Right ventricle myocardium inferior (tissue), 1 donor: ENCODE measurements at regions of chr11 and their contacts with region 1.

Region 1: DNA sequence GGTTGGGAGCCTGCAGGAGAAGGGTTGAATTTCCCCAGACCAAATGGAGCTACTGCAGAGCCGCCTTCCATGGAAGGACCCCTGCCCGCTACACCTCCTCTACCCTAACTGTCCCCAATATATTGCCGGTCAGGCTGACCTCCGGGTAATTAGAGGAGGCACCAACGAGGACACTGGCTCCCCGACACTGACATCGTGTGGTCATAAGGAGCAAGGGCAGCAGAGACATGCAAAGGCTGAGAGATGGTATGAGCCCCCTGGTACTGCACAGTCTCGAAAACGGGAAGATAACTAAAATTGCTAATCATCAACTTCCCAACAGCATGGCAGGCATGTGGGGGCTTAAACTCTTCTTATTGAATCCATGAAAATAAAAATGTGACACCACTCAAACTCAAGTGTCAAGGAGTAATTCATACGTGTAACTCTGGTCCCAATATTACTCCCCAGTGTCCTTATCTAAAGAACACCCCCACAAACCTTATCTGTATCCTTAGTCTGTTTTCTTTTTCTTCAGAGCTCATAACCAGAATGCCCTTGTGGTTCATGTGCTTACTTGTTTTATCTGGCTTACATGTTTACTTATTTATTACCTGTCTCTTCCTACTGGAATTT is 4.4 kb downstream of the CAVIN3 start:
- DNase-seq: peak; percentile 67
- ATAC-seq: peak; percentile 27

Region 2: GRCh38 chr11:5818245-5818886 is 497.6 kb before region 1 on chr11:
- intact Hi-C with region 1: no loop called
- DNase-seq: no peak
- ATAC-seq: no peak

Region 3: GRCh38 chr11:6022956-6023355 is 293.0 kb before region 1 on chr11:
- intact Hi-C with region 1: loop called (anchors 2 kb)
- DNase-seq: no peak
- ATAC-seq: peak; percentile 69

Region 4: GRCh38 chr11:6223854-6224253 is 92.1 kb before region 1 on chr11:
- intact Hi-C with region 1: no loop called
- DNase-seq: no peak
- ATAC-seq: no peak

Region 5: DNA sequence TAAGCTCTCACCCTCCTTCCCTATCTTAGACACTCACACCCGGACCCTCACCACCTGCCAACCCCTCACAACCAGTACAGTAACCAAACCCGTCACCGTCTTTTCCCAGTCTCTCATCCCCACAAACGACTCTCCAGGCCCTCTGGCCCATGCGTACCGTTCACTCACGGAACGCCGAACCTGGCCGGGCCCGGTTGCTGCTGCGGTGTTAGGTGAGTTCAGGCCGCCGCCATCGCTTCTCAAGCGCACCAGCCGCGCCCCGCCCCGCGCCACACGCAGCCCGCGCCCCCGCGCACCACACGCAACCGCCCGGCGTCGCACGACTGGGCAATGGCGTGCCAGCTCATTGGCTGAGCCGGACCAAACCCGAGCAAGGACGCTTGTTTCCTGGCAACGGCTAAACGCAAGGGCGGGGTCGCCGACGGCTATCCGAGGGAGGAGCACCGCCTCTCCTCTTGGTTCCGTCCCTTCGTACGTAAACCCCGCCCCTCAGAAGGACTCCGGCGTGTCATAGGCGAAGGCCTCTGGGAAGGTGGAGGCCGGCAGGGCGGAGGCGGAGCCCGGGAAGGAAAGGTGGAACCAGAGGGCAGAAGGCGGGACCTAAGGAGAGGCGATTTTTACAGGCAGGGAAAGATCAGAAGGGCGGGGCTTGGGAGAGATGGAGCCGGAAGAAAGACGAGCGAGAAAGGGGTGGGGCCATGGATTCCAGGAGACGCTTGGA is 81.4 kb before region 1 on chr11 and contains the start of gene FHIP1B:
- intact Hi-C with region 1: loop called (anchors 1 kb)
- DNase-seq: peak; percentile 100
- ATAC-seq: peak; percentile 98
- total RNA-seq, gene FHIP1B: 13.3 TPM

Region 6: DNA sequence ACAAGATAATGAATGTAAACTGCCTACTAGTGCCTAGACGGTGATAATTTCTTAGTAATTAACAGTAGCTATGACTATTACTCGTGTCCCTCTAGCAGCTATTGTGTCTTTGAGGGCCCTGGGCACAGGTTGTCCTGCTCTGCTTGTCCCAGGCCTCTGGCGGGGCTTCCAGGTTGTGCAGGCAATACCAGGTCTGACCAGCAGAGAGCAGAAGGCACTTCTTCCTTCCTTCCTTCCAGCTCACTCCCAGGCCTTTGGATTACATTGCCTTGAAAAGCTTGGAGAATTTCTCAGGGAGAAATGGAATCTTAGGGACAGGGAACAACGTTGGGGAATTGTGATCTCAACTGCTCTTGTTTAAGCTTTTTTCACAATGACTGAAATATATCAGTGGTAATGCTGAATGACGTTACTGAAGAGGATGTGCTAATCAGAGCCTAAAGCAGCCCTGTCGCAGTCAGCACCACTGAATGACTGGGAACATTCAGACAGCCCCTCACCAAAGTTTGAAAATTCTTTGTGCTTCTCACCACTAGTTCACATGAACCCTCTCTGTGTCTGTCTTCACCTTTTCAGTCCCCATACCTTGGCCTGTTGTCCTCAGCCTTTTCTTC is 64.7 kb before region 1 on chr11:
- intact Hi-C with region 1: loop called (anchors 5 kb)
- DNase-seq: peak; percentile 79
- ATAC-seq: peak; percentile 82

Region 7: GRCh38 chr11:6269994-6270393 is 45.9 kb before region 1 on chr11:
- intact Hi-C with region 1: no loop called
- DNase-seq: no peak
- ATAC-seq: no peak

Region 8: DNA sequence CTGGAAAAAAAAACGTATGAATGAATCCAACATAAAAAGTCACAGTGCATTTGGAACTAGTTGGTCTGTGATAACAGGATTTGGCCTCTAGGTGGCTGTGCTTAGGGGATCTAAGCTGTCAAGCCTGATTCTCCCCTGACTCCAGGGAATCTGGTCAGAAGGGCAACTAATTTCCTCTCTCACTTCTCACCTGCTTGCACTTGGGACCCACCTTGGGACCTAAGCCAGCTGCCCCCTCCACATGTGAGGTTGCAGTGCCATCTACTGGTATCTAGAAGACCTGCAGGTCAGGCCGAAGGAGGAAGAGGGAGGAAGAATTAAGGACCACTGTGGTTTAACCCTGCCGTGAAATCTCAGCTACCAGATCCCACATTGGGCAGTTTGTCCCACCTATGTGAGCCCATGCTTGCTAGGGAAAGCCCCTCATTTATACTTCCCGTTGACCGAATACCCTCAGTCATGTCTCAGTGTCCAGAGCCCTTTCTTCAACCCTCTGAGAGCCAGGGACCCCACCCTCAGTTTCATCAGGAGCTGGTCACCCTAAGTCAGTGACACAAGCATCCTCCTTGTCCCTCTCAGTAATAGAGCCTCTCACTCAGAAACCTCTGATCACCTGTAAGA is 37.6 kb after region 1 on chr11:
- intact Hi-C with region 1: loop called (anchors 5 kb)
- DNase-seq: peak; percentile 74
- ATAC-seq: peak; percentile 59

Region 9: GRCh38 chr11:6362873-6363678 is 47.2 kb after region 1 on chr11:
- intact Hi-C with region 1: loop called (anchors 5 kb)
- DNase-seq: peak; percentile 85
- ATAC-seq: peak; percentile 92

Region 10: GRCh38 chr11:6473481-6474422 is 157.8 kb after region 1 on chr11 and contains the start of gene TRIM3:
- intact Hi-C with region 1: loop called (anchors 5 kb)
- DNase-seq: peak; percentile 97
- ATAC-seq: peak; percentile 93
- total RNA-seq, gene TRIM3: 12.5 TPM